ENCODE measurements at regions of chr4 and their contacts with region 1.

Region 1: DNA sequence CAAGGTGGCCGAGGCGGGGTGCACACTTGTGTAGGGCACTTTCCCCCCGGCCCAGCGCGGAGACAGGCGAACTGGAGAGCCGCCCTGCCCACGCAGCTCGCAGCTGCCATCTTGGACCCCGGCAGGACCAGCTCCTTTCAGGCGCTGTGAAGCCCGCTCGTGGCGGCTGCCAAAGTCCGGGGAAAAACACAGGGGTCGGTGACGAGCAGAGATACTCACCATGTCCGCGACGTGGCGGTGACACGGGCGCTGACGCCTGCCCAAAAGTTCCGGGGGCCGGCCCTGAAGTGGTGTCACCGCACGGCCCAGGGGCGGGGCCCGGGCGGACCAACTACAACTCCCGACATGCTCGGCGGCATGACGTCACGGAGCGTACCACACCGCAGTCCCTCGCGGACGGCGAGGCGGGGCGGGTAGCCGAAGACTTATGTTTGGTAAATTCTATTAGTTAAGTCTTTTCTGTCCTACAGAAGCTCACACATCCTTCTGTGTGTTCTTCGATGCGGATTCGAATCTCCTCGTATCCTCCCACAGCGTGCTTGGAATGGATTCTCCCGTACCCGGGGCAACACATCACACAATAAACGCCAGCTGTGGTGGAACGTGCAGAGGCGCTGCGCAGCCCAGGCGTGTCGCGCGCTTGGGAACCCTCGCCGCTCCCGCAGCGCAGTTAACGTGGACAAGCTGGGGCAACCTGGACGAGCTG is at the start of gene UFSP2:
- DNase-seq: peak; percentile 70
- H3K4me3 ChIP-seq: peak within 1 kb of the TSS; percentile 85
- H3K27ac ChIP-seq: peak within 1 kb of the TSS; percentile 98
- H3K27me3 ChIP-seq: no peaks in the 10 kb centered on the region
- CTCF ChIP-seq: no peak
- polyA plus RNA-seq, gene UFSP2: 41.2 and 54.1 TPM in 2 replicates

Region 2: GRCh38 chr4:185384930-185385331 is 40.9 kb before region 1 on chr4:
- CTCF ChIA-PET with region 1: no interaction called
- POLR2A ChIA-PET with region 1: no interaction called
- DNase-seq: no peak
- H3K4me3 ChIP-seq: no peak overlapping the region
- H3K27ac ChIP-seq: no peak overlapping the region
- H3K27me3 ChIP-seq: no peaks in the 10 kb centered on the region
- CTCF ChIP-seq: no peak

Region 3: GRCh38 chr4:185395956-185396723 is 29.7 kb before region 1 on chr4:
- CTCF ChIA-PET with region 1: no interaction called
- POLR2A ChIA-PET with region 1: interaction called, 15 read pairs
- DNase-seq: peak; percentile 91
- H3K4me3 ChIP-seq: peak overlapping the region; percentile 73
- H3K27ac ChIP-seq: peak overlapping the region; percentile 93
- H3K27me3 ChIP-seq: no peaks in the 10 kb centered on the region
- CTCF ChIP-seq: no peak

Region 4: DNA sequence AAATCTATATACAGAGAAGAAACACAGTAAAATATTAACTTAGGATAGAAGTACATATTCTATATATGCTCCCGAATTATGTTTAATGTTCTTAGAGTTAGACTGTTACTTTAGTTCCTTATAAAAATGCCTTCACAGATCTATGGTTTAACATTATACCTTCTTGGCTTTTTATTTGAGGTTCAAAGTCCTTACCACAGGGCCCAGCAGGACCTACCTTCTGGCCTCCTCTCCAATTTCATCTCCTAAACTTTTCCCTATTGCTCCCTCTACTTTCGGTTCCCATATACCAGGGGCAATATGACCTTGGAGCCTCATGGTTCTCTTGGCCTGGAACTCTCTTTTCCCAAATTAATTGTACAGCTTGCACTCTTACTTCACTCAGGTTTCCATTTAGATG is 17.4 kb before region 1 on chr4:
- CTCF ChIA-PET with region 1: no interaction called
- POLR2A ChIA-PET with region 1: no interaction called
- DNase-seq: no peak
- H3K4me3 ChIP-seq: no peak overlapping the region
- H3K27ac ChIP-seq: no peak overlapping the region
- H3K27me3 ChIP-seq: no peaks in the 10 kb centered on the region
- CTCF ChIP-seq: no peak

Measured in AG04450 (cell line).